ENCODE measurements at regions of chr18 and their contacts with region 1.

Region 1: GRCh38 chr18:10518595-10519255 is 7.1 kb upstream of the NAPG start:
- DNase-seq: no peak
- ATAC-seq: peak; percentile 39; the same call in 1 of the 2 replicates
- H3K4me3 Mint-ChIP-seq: no peak overlapping the region
- H3K27ac Mint-ChIP-seq: no peak overlapping the region
- H3K4me1 Mint-ChIP-seq: peaks cover 7% of the 10 kb centered on the region
- H3K27me3 Mint-ChIP-seq: no peaks in the 10 kb centered on the region
- CTCF ChIP-seq: no peak

Region 2: DNA sequence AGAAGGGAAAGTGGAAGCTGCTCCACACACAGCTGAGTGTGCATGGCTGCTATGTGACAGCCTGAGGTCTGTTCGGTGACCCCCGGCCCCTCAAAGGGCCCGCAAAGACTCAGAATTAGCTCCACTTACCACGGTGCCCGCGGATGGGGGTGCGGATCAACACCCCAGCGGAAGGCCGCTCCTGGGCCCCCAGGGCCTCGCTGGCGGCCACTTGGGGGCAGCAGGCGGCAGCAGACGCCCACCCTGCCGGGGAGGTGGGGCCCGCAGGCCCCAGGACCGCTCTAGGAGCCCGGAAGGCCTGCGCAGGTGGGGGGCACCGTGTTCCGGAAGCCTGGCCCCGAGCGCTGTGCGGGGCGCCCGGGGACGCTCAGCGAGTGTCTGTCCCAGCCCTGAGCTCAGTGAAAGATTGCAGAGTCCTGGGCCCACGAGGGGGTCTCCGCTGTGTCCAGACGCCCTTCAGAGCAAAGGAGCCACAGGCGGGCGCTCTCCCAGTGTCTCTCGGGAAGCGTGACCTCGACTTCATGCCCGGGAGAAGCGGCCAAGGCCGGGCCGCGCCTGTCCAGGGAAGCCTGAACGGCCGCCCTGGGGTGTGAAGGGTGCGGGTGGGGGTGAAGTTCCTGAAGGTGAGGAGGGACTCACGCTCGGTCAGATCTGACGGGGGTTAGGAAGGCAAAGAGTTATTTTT is 486.3 kb before region 1 on chr18:
- CTCF ChIA-PET with region 1: interaction called, 10 read pairs
- POLR2A ChIA-PET with region 1: no interaction called
- DNase-seq: peak; percentile 71
- ATAC-seq: peak; percentile 95
- H3K4me3 Mint-ChIP-seq: peak overlapping the region; percentile 31
- H3K27ac Mint-ChIP-seq: no peak overlapping the region
- H3K4me1 Mint-ChIP-seq: peaks cover 11% of the 10 kb centered on the region
- H3K27me3 Mint-ChIP-seq: peaks cover 4% of the 10 kb centered on the region; the same call in 1 of the 2 replicates
- CTCF ChIP-seq: peak; percentile 26; the same call in 1 of the 2 replicates